B cell (primary cell): ENCODE measurements at regions of chr3 and their contacts with region 1.

Region 1: DNA sequence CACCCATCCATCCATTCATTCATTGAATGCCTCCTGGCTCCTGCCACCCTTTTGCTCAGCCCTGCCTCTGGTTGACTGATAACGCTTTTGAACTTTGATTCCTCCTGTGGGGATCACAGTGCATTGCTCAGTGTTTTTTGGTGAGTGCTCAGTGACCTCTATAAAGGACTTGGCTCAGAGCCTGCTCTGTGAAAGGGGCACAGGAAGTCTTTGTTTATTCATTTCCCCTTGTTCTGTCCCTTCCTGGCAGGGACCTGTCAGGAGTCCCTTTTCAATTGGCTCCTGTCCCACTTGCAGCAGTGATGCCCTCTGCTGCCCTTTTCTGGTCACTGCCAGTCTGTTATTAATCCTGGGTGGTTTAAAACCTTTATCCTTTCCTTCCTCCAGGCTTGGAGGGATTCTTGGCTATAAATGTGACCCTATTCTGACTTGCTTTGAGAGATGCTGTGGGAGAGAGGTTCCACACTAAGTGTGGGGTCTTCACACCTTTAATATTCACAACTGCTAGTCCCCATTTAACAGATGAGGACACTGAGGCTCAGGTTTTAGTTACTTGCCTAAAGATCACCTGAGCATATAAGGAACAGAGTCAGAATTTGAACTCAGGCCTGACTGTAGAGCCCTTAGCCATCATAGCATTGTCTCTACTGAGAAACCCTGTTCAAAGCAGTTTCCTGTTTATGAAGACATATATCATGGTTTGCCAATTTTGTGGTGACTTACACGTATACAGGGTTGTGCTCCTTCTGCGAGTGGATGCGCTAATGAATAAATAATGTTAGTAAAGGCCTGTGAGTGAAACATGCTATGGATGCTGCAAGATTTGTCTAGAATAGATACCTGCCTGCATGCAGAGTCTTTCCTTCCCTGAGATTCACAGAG is 23.2 kb upstream of the TATDN2 start:
- DNase-seq: peak; percentile 79
- ATAC-seq: peak; percentile 46
- H3K4me3 ChIP-seq: no peak overlapping the region
- H3K4me3 Mint-ChIP-seq: peak overlapping the region; percentile 67
- H3K27ac ChIP-seq: peak overlapping the region in 1 of 2 donors; percentile 1
- H3K27ac Mint-ChIP-seq: peak overlapping the region; percentile 83
- H3K4me1 ChIP-seq: peaks cover 40 to 66% of the 10 kb centered on the region in 2 donors
- H3K4me1 Mint-ChIP-seq: peaks cover 63% of the 10 kb centered on the region
- H3K27me3 ChIP-seq: no peaks in the 10 kb centered on the region
- H3K27me3 Mint-ChIP-seq: no peaks in the 10 kb centered on the region
- CTCF ChIP-seq: peak; percentile 83

Region 2: DNA sequence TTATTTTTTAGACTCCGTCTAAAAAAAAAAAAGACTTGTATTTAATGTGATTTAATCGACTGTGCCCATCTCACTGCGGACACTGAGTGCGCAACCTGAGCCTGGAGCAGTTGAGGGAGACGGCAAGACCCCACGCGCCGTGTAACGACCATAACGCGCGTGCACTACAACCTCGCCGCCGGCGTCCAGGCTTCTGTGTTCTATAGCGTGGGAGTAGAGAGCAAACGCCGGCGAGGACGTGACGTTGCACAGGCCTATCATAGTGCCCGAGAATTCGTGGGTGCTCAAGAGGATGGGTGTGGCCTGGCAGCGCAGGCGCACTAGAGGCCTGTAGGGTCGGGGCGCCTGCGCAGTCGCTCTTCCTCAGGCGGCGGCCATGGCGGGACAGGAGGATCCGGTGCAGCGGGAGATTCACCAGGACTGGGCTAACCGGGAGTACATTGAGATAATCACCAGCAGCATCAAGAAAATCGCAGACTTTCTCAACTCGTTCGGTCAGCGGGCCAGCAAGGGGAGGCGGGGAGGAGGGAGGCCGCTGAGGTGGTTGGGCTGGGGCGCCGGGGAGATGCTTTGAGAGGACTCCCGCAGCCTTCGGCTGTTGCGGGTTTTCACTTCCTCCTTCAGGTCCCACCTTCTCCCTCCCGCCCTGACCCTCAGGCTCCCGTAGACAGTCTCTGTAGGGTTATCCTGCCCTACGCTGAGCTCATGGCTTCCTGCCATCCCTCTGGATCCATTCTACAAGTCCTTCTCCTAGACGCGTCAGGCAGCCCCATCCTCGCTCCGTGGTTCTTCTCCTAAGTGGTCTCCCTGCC is 109.5 kb before region 1 on chr3 and contains the start of gene BRK1:
- CTCF ChIA-PET with region 1: interaction called, 4 read pairs
- POLR2A ChIA-PET with region 1: no interaction called
- intact Hi-C with region 1: loop called (anchors 1 kb)
- DNase-seq: peak; percentile 98
- ATAC-seq: peak; percentile 96
- H3K4me3 ChIP-seq: peak within 1 kb of the TSS; percentile 61 to 96 (median 84)
- H3K4me3 Mint-ChIP-seq: peak within 1 kb of the TSS; percentile 94
- H3K27ac ChIP-seq: peak within 1 kb of the TSS; percentile 48 to 85
- H3K27ac Mint-ChIP-seq: peak within 1 kb of the TSS; percentile 97
- H3K4me1 ChIP-seq: peaks cover 16 to 27% of the 10 kb centered on the region in 2 donors
- H3K4me1 Mint-ChIP-seq: peaks cover 34% of the 10 kb centered on the region
- H3K27me3 ChIP-seq: no peaks in the 10 kb centered on the region
- H3K27me3 Mint-ChIP-seq: no peaks in the 10 kb centered on the region
- CTCF ChIP-seq: no peak
- total RNA-seq, gene BRK1: 82.8 and 86.3 TPM in 2 replicates

Region 3: GRCh38 chr3:10149226-10149625 is 75.8 kb before region 1 on chr3:
- CTCF ChIA-PET with region 1: interaction called, 7 read pairs
- POLR2A ChIA-PET with region 1: interaction called, 5 read pairs
- intact Hi-C with region 1: loop called (anchors 2 kb)
- DNase-seq: peak; percentile 62
- ATAC-seq: peak; percentile 67
- H3K4me3 ChIP-seq: no peak overlapping the region
- H3K4me3 Mint-ChIP-seq: peak overlapping the region; percentile 5
- H3K27ac ChIP-seq: peak overlapping the region; percentile 28 to 58
- H3K27ac Mint-ChIP-seq: peak overlapping the region; percentile 82
- H3K4me1 ChIP-seq: peaks cover 17 to 36% of the 10 kb centered on the region in 2 donors
- H3K4me1 Mint-ChIP-seq: peaks cover 28% of the 10 kb centered on the region
- H3K27me3 ChIP-seq: no peaks in the 10 kb centered on the region
- H3K27me3 Mint-ChIP-seq: no peaks in the 10 kb centered on the region
- CTCF ChIP-seq: no peak

Region 4: GRCh38 chr3:10173926-10174435 is 51.0 kb before region 1 on chr3:
- CTCF ChIA-PET with region 1: interaction called, 15 read pairs
- POLR2A ChIA-PET with region 1: interaction called, 12 read pairs
- intact Hi-C with region 1: no loop called
- DNase-seq: peak; percentile 52
- ATAC-seq: peak; percentile 59
- H3K4me3 ChIP-seq: no peak overlapping the region
- H3K4me3 Mint-ChIP-seq: peak overlapping the region; percentile 18
- H3K27ac ChIP-seq: peak overlapping the region in 1 of 2 donors; percentile 50
- H3K27ac Mint-ChIP-seq: peak overlapping the region; percentile 87
- H3K4me1 ChIP-seq: peaks cover 14 to 32% of the 10 kb centered on the region in 2 donors
- H3K4me1 Mint-ChIP-seq: peaks cover 36% of the 10 kb centered on the region
- H3K27me3 ChIP-seq: no peaks in the 10 kb centered on the region
- H3K27me3 Mint-ChIP-seq: no peaks in the 10 kb centered on the region
- CTCF ChIP-seq: no peak

Region 5: DNA sequence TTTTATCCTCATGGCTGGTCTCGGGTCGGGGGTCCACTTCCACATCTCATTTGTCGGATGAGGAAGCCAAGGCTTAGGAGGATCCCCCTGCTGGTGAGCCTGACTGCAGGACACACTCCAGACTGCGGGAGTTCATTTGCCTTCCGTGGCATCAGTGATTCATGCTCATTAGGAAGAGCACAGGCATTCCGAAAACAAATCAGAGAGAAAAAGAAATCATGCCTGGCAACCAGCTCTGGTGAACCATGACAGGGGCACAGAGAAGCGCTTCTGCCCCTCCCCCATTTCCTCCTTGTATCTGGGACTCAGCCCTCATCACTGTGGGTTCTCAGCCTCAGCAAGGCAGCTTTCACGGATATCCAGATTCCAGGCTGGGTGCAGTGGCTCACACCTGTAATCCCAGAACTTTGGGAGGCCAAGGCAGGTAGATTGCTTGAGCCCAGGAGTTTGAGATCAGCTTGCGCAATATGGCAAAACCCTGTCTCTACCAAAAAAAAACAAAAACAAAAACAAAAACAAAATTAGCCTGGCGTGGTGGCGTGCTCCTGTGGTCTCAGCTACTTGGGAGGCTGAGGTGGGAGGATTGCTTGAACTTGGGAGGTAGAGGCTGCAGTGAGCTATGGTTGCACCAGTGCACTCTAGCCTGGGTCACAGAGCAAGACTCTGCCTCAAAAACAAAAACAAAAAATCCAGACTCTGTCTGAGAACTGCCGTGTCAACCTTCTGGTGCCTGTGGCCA is 31.9 kb before region 1 on chr3:
- CTCF ChIA-PET with region 1: interaction called, 44 read pairs
- POLR2A ChIA-PET with region 1: interaction called, 16 read pairs
- intact Hi-C with region 1: loop called (anchors 1 kb)
- DNase-seq: peak; percentile 89
- ATAC-seq: peak; percentile 64
- H3K4me3 ChIP-seq: peak overlapping the region in 3 of 5 experiments; percentile 11 to 53 (median 32)
- H3K4me3 Mint-ChIP-seq: peak overlapping the region; percentile 75
- H3K27ac ChIP-seq: peak overlapping the region; percentile 84 to 95
- H3K27ac Mint-ChIP-seq: peak overlapping the region; percentile 96
- H3K4me1 ChIP-seq: peaks cover 89 to 94% of the 10 kb centered on the region in 2 donors
- H3K4me1 Mint-ChIP-seq: peaks cover 82% of the 10 kb centered on the region
- H3K27me3 ChIP-seq: no peaks in the 10 kb centered on the region
- H3K27me3 Mint-ChIP-seq: no peaks in the 10 kb centered on the region
- CTCF ChIP-seq: peak; percentile 39

Region 6: GRCh38 chr3:10213156-10213792 is 11.8 kb before region 1 on chr3:
- CTCF ChIA-PET with region 1: interaction called, 18 read pairs
- POLR2A ChIA-PET with region 1: interaction called, 5 read pairs
- intact Hi-C with region 1: loop called (anchors 1 kb)
- DNase-seq: peak; percentile 65
- ATAC-seq: peak; percentile 87
- H3K4me3 ChIP-seq: no peak overlapping the region
- H3K4me3 Mint-ChIP-seq: peak overlapping the region; percentile 72
- H3K27ac ChIP-seq: no peak overlapping the region
- H3K27ac Mint-ChIP-seq: peak overlapping the region; percentile 71
- H3K4me1 ChIP-seq: peaks cover 13 to 30% of the 10 kb centered on the region in 2 donors
- H3K4me1 Mint-ChIP-seq: peaks cover 19% of the 10 kb centered on the region
- H3K27me3 ChIP-seq: no peaks in the 10 kb centered on the region
- H3K27me3 Mint-ChIP-seq: no peaks in the 10 kb centered on the region
- CTCF ChIP-seq: no peak